ENCODE measurements at regions of chr4 and their contacts with region 1.

Region 1: GRCh38 chr4:48963042-48963679 is 22.9 kb upstream of the CWH43 start:
- H3K4me3 Mint-ChIP-seq: no peak overlapping the region
- H3K27ac Mint-ChIP-seq: no peak overlapping the region
- H3K4me1 Mint-ChIP-seq: no peaks in the 10 kb centered on the region
- H3K27me3 Mint-ChIP-seq: peaks cover 2% of the 10 kb centered on the region

Region 2: GRCh38 chr4:47907089-47907646 is 1056.0 kb before region 1 on chr4:
- intact Hi-C with region 1: no loop called
- H3K4me3 Mint-ChIP-seq: no peak overlapping the region
- H3K27ac Mint-ChIP-seq: peak overlapping the region; percentile 18
- H3K4me1 Mint-ChIP-seq: peaks cover 40% of the 10 kb centered on the region
- H3K27me3 Mint-ChIP-seq: no peaks in the 10 kb centered on the region

Region 3: DNA sequence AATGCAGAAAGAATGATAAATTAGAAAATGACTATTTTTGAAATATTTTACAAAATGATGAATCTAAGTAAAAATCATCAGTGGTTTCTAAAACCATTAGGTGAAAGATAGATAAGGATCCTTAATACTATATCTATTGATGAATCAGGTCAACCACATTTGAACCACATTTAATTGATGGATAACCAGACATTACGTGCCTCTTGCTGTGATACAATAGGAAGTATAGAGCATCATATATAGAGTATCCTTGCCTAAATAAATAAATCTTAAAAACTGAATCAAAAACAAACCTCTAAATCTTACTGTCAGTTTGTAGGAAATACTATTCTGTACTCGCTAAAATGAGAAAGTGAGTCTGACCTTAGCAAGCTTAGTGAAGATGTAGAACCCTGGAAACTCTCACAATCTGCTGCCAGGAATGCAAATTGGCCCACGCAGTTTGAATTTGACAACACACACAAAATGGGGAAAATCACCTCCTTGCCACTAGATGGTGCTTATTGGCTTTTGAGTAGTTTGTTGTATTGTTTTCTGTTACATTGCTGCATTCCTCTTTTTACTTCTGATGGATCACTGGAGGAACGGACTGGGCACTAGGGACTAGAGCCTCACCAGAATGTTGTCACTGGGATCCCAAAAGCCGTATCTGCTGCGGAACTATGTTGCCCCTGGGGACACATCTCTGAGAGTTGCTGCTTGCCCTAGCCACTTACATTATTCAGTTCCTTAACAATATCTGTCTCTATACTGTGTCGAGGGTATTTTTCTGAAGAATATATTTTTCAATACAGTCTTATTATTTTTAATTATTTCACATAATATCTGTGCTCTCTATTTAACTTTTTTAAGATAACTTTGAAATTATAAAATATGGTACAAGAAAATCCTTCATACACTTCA is 647.2 kb before region 1 on chr4:
- intact Hi-C with region 1: loop called (anchors 10 kb)
- H3K4me3 Mint-ChIP-seq: no peak overlapping the region
- H3K27ac Mint-ChIP-seq: no peak overlapping the region
- H3K4me1 Mint-ChIP-seq: no peaks in the 10 kb centered on the region
- H3K27me3 Mint-ChIP-seq: no peaks in the 10 kb centered on the region

Region 4: GRCh38 chr4:48445704-48446103 is 517.5 kb before region 1 on chr4:
- intact Hi-C with region 1: loop called (anchors 5 kb)
- H3K4me3 Mint-ChIP-seq: no peak overlapping the region
- H3K27ac Mint-ChIP-seq: no peak overlapping the region
- H3K4me1 Mint-ChIP-seq: peaks cover 6% of the 10 kb centered on the region
- H3K27me3 Mint-ChIP-seq: no peaks in the 10 kb centered on the region

Region 5: DNA sequence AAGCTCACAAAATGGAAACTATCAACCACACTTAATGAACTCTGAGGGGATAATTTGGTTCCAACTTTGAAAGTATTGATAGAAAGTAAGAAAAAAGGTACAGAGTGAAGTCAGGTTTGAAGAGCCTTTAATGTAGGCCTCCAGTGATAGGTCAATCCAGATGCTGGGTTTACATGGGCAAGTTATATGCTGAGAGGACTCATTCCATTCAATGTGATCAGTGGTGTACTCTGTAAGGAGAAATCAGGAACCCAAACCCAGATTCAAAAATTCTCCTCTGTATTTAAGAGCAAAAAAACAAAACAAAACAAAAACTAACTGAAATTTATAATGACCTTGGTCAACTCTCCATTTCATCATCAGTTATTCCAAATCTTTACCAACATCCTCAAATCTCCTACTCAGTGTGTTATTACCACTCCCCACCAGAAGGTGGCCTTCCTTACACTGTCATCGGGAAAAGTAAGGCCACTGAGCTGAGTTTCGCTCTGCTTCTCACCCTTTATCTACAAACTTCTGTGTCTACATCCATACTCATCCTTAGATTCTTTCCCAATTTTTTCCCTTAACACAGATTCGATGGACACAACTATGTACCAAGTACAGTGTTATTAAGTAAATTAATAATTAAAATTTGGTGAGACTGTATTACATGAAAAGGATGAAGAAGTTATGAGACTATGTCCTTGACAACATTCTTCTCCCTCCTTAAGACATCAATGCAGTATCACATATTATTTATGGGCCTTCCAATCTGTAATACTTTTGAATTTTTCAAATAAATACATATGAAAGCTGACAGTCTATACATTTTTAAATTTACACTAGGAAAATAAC is 384.8 kb before region 1 on chr4:
- intact Hi-C with region 1: loop called (anchors 1 kb)
- H3K4me3 Mint-ChIP-seq: no peak overlapping the region
- H3K27ac Mint-ChIP-seq: no peak overlapping the region
- H3K4me1 Mint-ChIP-seq: no peaks in the 10 kb centered on the region
- H3K27me3 Mint-ChIP-seq: no peaks in the 10 kb centered on the region

Region 6: GRCh38 chr4:48877827-48878533 is 85.2 kb before region 1 on chr4:
- intact Hi-C with region 1: no loop called
- H3K4me3 Mint-ChIP-seq: no peak overlapping the region
- H3K27ac Mint-ChIP-seq: no peak overlapping the region
- H3K4me1 Mint-ChIP-seq: no peaks in the 10 kb centered on the region
- H3K27me3 Mint-ChIP-seq: no peaks in the 10 kb centered on the region

Region 7: GRCh38 chr4:49000806-49001205 is 37.6 kb after region 1 on chr4:
- intact Hi-C with region 1: no loop called
- H3K4me3 Mint-ChIP-seq: no peak overlapping the region
- H3K27ac Mint-ChIP-seq: no peak overlapping the region
- H3K4me1 Mint-ChIP-seq: no peaks in the 10 kb centered on the region
- H3K27me3 Mint-ChIP-seq: no peaks in the 10 kb centered on the region

Measured in dendritic cell treated with granulocyte-macrophage colony-stimulating factor and Interleukin-4, amounts not matched to agents 40 ng/mL and 50 ng/mL, for 4 days (primary cell).